Transverse colon (tissue), 4 donors: ENCODE measurements at regions of chr13 and their contacts with region 1.

Region 1: GRCh38 chr13:93473441-93474270 is 247.0 kb downstream of the GPC6 start:
- DNase-seq: no peak
- H3K4me3 ChIP-seq: no peak overlapping the region
- H3K27ac ChIP-seq: no peak overlapping the region
- H3K4me1 ChIP-seq: no peaks in the 10 kb centered on the region
- H3K27me3 ChIP-seq: no peaks in the 10 kb centered on the region
- CTCF ChIP-seq: no peak
- EP300 ChIP-seq: no peak
- POLR2A ChIP-seq: no peak

Region 2: DNA sequence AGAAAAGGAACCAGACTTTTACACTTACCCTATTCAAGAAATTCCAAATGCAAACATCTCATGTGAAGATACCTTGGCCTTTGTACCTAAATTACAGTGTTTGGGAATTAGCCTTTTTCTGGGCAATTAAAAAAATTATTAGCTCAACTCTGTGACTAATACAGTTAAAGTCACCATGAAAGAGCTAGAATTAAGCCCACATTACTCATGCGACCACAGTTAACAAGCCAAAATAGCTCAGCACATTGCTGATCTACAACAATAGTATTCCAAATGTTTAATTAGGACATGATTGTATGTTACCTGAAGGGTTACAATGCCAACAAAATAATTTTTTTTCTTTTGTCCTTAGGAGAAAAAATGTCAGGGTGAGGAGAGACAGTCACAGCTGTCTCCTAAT is 510.6 kb before region 1 on chr13:
- in situ Hi-C with region 1: no loop called
- intact Hi-C with region 1: loop called (anchors 5 kb)
- DNase-seq: no peak
- H3K4me3 ChIP-seq: no peak overlapping the region
- H3K27ac ChIP-seq: no peak overlapping the region
- H3K4me1 ChIP-seq: no peaks in the 10 kb centered on the region
- H3K27me3 ChIP-seq: no peaks in the 10 kb centered on the region
- CTCF ChIP-seq: no peak
- EP300 ChIP-seq: no peak
- POLR2A ChIP-seq: no peak

Region 3: GRCh38 chr13:94009701-94010100 is 536.0 kb after region 1 on chr13:
- in situ Hi-C with region 1: no loop called
- intact Hi-C with region 1: no loop called
- DNase-seq: no peak
- H3K4me3 ChIP-seq: no peak overlapping the region
- H3K27ac ChIP-seq: no peak overlapping the region
- H3K4me1 ChIP-seq: no peaks in the 10 kb centered on the region
- H3K27me3 ChIP-seq: no peaks in the 10 kb centered on the region
- CTCF ChIP-seq: no peak
- EP300 ChIP-seq: no peak
- POLR2A ChIP-seq: no peak